ENCODE measurements at regions of chr17 and their contacts with region 1.

Region 1: GRCh38 chr17:79839363-79840268 is at the start of gene CBX4:
- DNase-seq: peak in 1 of 2 experiments; percentile 85
- H3K4me3 ChIP-seq: peak within 1 kb of the TSS; percentile 43 to 63 (median 60)
- H3K27ac ChIP-seq: no peak within 1 kb of the TSS
- H3K4me1 ChIP-seq: peaks cover 6 to 51% (median 38%) of the 10 kb centered on the region in 4 experiments
- H3K27me3 ChIP-seq: peaks cover 63 to 87% (median 84%) of the 10 kb centered on the region in 4 experiments
- CTCF ChIP-seq: peak; percentile 54 to 69 (median 61)
- EP300 ChIP-seq: 0 out of 3 replicates have a peak, but pooled peaks of 1 of the 2 experiments have one; percentile 27
- POLR2A ChIP-seq: peak in 1 of 2 experiments; percentile 50; a peak in 2 of 3 replicates
- RAD21 ChIP-seq: peak; percentile 17 to 45; a peak in 3 of 4 replicates
- total RNA-seq, gene CBX4: 3.2 and 4.0 TPM in 2 replicates

Region 2: DNA sequence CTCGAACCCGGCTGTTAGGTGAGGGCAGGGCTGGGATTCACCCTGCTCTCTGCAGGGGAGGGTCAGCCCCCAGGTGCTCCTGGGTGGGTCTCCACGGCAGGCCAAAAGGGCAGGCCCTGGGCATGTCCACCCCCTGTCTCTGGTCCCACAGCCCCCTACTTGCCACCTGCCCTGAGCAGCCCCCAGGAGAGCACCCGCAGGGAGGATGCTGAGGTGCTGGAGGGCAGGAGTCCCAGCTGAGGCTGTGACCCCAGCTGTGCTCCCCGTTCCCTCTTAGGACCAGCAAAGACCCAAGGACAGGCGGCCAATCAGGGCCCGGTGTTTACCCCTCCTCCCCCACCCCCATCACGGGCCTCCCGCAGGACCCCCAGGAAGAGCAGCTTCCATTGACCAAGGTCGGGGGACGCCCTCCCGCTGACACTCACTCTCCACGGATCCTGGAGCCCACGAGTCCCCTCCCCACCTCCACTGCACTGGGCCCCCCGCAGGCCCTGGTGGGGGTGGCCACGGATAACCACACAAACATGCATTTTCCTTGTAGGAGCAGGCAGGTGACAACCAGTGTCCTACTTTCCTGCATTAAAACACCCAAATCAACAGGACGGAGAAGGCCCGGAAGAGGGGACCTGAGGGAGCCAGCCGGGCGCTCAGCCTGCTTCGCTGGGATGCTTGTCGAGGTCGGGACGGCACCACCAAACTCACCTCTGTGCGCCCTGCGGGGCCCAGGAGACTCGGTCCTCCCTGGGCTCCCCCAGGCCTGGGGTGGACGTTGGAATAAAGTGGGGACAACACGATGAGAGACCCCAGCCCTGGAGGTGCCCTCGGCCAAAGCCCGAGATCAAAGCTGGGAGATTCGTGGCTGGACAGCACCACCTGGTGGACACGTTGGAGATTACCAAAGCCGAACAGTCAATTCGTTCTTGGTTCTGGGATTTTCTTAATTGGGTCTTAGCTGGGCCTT is 131.4 kb before region 1 on chr17:
- CTCF ChIA-PET with region 1: no interaction called
- POLR2A ChIA-PET with region 1: no interaction called
- DNase-seq: peak in 1 of 2 experiments; percentile 92
- H3K4me3 ChIP-seq: peak overlapping the region in 2 of 4 experiments; percentile 2 to 48; a peak in 2 of 8 replicates
- H3K27ac ChIP-seq: no peak overlapping the region
- H3K4me1 ChIP-seq: peaks cover 0 to 13% (median 3%) of the 10 kb centered on the region in 4 experiments; a peak in 5 of 7 replicates
- H3K27me3 ChIP-seq: no peaks in the 10 kb centered on the region
- CTCF ChIP-seq: peak; percentile 70 to 75 (median 73)
- EP300 ChIP-seq: no peak
- POLR2A ChIP-seq: no peak
- RAD21 ChIP-seq: peak; percentile 89 to 90

Region 3: DNA sequence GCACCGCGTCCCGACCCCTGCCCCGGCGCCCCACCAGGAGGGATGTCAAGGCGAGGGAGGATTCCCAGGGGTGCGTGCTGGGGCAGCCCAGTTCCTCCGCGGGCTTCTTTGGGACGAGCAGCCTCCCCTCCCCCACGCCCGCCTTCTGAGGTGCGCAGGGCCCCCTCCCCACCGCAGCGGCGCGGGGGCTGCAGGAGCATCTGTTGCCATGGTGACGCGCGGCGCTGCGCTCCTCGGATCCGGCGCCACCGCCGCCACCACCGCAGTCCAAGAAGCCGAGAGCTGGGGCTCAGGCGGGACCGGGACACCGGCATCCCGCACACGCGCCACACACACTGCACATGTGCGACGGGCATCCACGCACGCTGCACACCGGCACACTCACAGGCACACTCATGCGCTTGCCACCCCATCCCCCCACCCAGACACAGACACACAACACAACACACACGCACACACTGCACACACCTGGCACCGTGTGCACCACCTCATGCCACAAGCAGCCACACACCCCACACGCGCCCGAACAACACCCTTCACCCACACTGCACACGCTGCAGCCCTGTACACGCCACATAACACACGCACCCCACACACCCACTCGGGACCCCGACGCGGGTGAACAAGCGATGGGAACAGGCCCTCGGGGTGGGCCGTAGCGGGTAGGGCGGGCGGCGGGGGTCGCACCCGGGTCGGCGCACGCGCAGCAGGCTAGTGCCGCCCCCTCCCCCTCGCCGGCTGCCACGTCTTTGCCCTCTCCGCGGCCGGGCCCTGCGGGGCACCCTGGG is 91.9 kb before region 1 on chr17:
- CTCF ChIA-PET with region 1: interaction called, 47 read pairs
- POLR2A ChIA-PET with region 1: interaction called, 3 read pairs
- DNase-seq: no peak
- H3K4me3 ChIP-seq: peak overlapping the region; percentile 17 to 62 (median 36)
- H3K27ac ChIP-seq: no peak overlapping the region
- H3K4me1 ChIP-seq: peaks cover 4 to 24% (median 15%) of the 10 kb centered on the region in 4 experiments
- H3K27me3 ChIP-seq: peaks cover 19 to 47% (median 35%) of the 10 kb centered on the region in 4 experiments
- CTCF ChIP-seq: no peak
- EP300 ChIP-seq: no peak
- POLR2A ChIP-seq: no peak
- RAD21 ChIP-seq: no peak

Region 4: DNA sequence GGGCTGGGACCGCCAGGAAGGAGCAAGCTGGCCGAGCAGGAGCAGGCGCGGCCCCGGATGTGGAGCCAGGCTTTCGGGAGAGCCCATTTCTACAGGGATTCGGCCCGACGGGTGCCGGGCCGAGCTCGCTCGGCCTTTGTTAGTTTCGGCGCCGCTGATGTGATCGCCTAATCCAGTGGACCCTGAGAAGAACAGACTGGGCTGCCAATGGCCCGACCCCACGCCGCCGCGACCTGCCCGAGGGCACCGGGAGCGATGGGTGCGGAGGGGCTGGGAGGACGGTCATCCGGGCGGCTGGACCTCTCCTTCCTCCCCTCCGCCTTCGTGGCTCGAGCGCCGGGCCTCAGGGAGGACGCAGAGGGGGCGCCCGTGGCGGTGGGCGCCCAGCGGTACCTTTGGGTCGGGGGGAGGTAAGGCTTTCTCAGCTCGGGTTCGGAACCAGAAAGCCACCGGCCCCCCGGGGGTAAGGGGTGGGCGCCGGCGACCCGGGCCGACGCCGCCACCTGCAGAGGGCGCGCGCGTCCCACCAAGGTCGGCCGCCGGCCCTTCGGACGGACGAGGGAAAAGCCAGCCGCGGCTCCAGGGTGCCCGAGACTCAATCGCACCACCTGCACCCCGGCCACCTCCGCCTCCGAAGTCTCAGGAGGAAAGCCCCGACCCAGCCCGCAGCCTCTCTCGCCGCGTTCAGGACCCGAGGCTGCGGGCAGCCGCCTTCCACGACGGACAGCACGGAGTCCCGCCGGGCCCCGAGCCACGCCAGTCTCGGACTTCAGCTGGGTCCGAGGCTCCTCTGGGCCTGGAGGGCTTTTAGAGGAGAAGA is 49.9 kb before region 1 on chr17:
- CTCF ChIA-PET with region 1: interaction called, 41 read pairs
- POLR2A ChIA-PET with region 1: interaction called, 49 read pairs
- DNase-seq: peak in 1 of 2 experiments; percentile 83
- H3K4me3 ChIP-seq: peak overlapping the region; percentile 18 to 62 (median 29); a peak in 7 of 8 replicates
- H3K27ac ChIP-seq: no peak overlapping the region
- H3K4me1 ChIP-seq: peaks cover 7 to 43% (median 30%) of the 10 kb centered on the region in 4 experiments
- H3K27me3 ChIP-seq: peaks cover 41 to 67% (median 61%) of the 10 kb centered on the region in 4 experiments
- CTCF ChIP-seq: peak; percentile 66 to 75 (median 73)
- EP300 ChIP-seq: no peak
- POLR2A ChIP-seq: no peak
- RAD21 ChIP-seq: peak; percentile 68 to 75

Region 5: GRCh38 chr17:79803997-79804855 is 35.4 kb before region 1 on chr17:
- CTCF ChIA-PET with region 1: interaction called, 576 read pairs
- POLR2A ChIA-PET with region 1: interaction called, 374 read pairs
- DNase-seq: peak in 1 of 2 experiments; percentile 70
- H3K4me3 ChIP-seq: peak overlapping the region in 3 of 4 experiments; percentile 2 to 42 (median 10); a peak in 3 of 8 replicates
- H3K27ac ChIP-seq: no peak overlapping the region
- H3K4me1 ChIP-seq: peaks cover 4 to 56% (median 43%) of the 10 kb centered on the region in 4 experiments
- H3K27me3 ChIP-seq: peaks cover 93 to 100% (median 99%) of the 10 kb centered on the region in 4 experiments
- CTCF ChIP-seq: no peak
- EP300 ChIP-seq: no peak
- POLR2A ChIP-seq: no peak
- RAD21 ChIP-seq: no peak

Region 6: DNA sequence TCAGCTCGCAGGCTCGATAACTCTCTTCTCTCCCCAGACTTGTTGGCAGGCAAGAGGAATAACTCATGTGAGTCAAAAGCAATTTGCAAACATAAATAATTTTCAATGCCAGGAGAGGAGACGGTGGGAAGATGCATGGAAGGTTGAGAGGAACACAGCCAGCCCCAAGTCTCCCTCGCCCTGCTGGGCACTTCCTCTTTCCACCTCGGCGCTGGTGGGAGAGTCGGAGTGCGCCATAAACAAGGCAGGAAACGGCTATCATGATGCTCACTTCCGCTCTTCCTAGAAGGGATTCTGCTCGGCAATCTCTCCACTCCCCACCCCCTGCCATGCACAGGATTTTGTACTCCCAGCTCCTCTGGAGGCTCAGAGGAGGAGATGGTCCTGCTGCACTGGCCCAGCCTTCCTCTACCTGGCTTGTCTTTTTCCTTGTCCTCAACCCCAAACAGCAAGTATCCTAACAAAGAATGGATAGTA is 13.4 kb before region 1 on chr17:
- CTCF ChIA-PET with region 1: interaction called, 84 read pairs
- POLR2A ChIA-PET with region 1: interaction called, 374 read pairs
- DNase-seq: no peak
- H3K4me3 ChIP-seq: no peak overlapping the region
- H3K27ac ChIP-seq: no peak overlapping the region
- H3K4me1 ChIP-seq: peaks cover 0 to 16% (median 2%) of the 10 kb centered on the region in 4 experiments; a peak in 4 of 7 replicates
- H3K27me3 ChIP-seq: peaks cover 20 to 75% (median 57%) of the 10 kb centered on the region in 4 experiments
- CTCF ChIP-seq: no peak
- EP300 ChIP-seq: no peak
- POLR2A ChIP-seq: no peak
- RAD21 ChIP-seq: no peak

Region 7: GRCh38 chr17:79923974-79924638 is 84.5 kb after region 1 on chr17:
- CTCF ChIA-PET with region 1: interaction called, 181 read pairs
- POLR2A ChIA-PET with region 1: interaction called, 9 read pairs
- DNase-seq: peak; percentile 50 to 99
- H3K4me3 ChIP-seq: no peak overlapping the region
- H3K27ac ChIP-seq: no peak overlapping the region
- H3K4me1 ChIP-seq: peaks cover 0 to 16% (median 6%) of the 10 kb centered on the region in 4 experiments; a peak in 2 of 7 replicates
- H3K27me3 ChIP-seq: peaks cover 0 to 14% (median under 1%) of the 10 kb centered on the region in 4 experiments; a peak in 2 of 7 replicates
- CTCF ChIP-seq: peak; percentile 94 to 98 (median 95)
- EP300 ChIP-seq: no peak
- POLR2A ChIP-seq: no peak
- RAD21 ChIP-seq: peak; percentile 80 to 84

Measured in H1 (cell line).